Heart left ventricle (tissue), 16 donors: ENCODE measurements at regions of chr2 and their contacts with region 1.

Region 1: GRCh38 chr2:18467749-18468360 is 92.6 kb downstream of the RDH14 start:
- DNase-seq: peak in 3 of 5 donors; percentile 32 to 62 (median 33)
- ATAC-seq: peak; percentile 30 to 73 (median 55)
- H3K4me3 ChIP-seq: no peak overlapping the region
- H3K27ac ChIP-seq: peak overlapping the region in 6 of 12 donors; percentile 10 to 69 (median 32)
- H3K4me1 ChIP-seq: peaks cover 0 to 28% (median 0%) of the 10 kb centered on the region in 12 donors
- H3K27me3 ChIP-seq: peaks cover 0 to 3% (median 0%) of the 10 kb centered on the region in 9 donors
- CTCF ChIP-seq: no peak
- POLR2A ChIP-seq: no peak

Region 2: GRCh38 chr2:18445433-18446320 is 22.2 kb before region 1 on chr2:
- intact Hi-C with region 1: loop called in 1 of 10 experiments (anchors 2 kb)
- DNase-seq: peak in 1 of 5 donors; percentile 37
- ATAC-seq: peak; percentile 20 to 91 (median 70)
- H3K4me3 ChIP-seq: no peak overlapping the region
- H3K27ac ChIP-seq: peak overlapping the region in 5 of 12 donors; percentile 14 to 52 (median 28)
- H3K4me1 ChIP-seq: peaks cover 0 to 17% (median 0%) of the 10 kb centered on the region in 12 donors
- H3K27me3 ChIP-seq: no peaks in the 10 kb centered on the region
- CTCF ChIP-seq: no peak
- POLR2A ChIP-seq: no peak

Region 3: DNA sequence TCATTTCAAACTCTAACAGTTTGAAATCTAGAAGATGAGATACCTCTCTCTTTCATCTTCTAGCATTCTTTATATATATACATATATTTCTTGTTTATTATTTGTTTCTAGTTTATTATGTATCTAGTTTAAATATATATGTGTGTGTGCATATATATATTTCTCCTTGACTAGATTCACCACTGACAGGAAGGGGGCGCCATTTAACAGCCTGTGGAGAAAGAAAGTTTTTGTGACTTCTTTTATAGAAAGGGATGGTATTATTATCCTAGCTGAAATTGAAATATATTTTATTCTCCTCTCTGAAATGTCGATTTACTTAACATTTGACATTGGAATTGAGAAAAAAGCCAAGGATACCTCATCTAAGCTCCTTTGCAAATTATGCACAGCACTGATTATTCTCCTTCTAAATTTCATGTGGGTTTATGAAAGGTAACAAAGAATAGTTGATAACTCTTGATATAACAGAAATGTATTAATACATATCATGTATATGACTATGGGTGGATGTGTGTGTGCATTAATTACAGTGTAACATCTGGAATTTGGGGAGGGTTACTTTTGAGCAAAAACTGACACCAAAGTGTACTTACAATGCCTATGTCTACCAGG is 282.2 kb after region 1 on chr2:
- intact Hi-C with region 1: no loop called
- DNase-seq: peak in 4 of 5 donors; percentile 36 to 61 (median 46)
- ATAC-seq: peak in 1 of 4 donors; percentile 47
- H3K4me3 ChIP-seq: no peak overlapping the region
- H3K27ac ChIP-seq: no peak overlapping the region
- H3K4me1 ChIP-seq: peaks cover 0 to 6% (median 0%) of the 10 kb centered on the region in 12 donors
- H3K27me3 ChIP-seq: no peaks in the 10 kb centered on the region
- CTCF ChIP-seq: peak; percentile 63 to 89 (median 76)
- POLR2A ChIP-seq: no peak